Gastrocnemius medialis (tissue), 4 donors: ENCODE measurements at regions of chrX and their contacts with region 1.

Region 1: DNA sequence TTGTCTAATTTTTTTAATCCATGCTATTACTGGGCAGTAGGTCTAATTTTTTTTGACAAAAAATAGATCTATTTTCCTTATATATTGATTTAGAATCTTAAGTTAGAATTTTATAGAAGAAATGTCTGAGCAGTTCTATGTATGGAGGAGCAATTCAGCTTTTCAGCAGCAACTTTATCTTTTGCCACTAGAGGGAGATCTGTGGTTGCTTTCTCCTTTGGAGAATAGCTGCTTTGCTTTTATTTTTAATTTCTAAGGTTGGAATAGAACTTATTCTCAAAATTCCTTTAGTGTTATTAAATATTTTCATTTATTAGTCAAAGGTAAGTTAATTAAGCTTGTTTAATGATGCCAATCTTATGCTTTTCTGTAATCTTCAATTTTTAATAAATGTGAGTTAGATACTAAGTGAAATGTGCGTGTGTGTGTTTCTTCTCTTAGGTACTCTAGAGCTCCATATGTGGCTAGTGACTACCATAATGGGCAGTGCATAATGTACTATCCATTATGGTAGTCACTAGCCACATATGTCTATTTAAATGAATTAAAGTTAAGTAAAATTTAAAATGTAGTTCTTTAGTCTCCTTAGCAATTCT is 29.3 kb downstream of the FAM199X start:
- DNase-seq: no peak
- ATAC-seq: no peak
- H3K4me3 ChIP-seq: no peak overlapping the region
- H3K27ac ChIP-seq: no peak overlapping the region
- H3K4me1 ChIP-seq: no peaks in the 10 kb centered on the region
- H3K27me3 ChIP-seq: no peaks in the 10 kb centered on the region
- CTCF ChIP-seq: peak; percentile 23 to 75 (median 34)
- POLR2A ChIP-seq: no peak

Region 2: GRCh38 chrX:103747163-103747562 is 448.4 kb before region 1 on chrX:
- in situ Hi-C with region 1: no loop called
- intact Hi-C with region 1: no loop called
- DNase-seq: no peak
- ATAC-seq: no peak
- H3K4me3 ChIP-seq: no peak overlapping the region
- H3K27ac ChIP-seq: no peak overlapping the region
- H3K4me1 ChIP-seq: no peaks in the 10 kb centered on the region
- H3K27me3 ChIP-seq: peaks cover 0 to 4% (median 0%) of the 10 kb centered on the region in 3 donors
- CTCF ChIP-seq: no peak
- POLR2A ChIP-seq: no peak

Region 3: DNA sequence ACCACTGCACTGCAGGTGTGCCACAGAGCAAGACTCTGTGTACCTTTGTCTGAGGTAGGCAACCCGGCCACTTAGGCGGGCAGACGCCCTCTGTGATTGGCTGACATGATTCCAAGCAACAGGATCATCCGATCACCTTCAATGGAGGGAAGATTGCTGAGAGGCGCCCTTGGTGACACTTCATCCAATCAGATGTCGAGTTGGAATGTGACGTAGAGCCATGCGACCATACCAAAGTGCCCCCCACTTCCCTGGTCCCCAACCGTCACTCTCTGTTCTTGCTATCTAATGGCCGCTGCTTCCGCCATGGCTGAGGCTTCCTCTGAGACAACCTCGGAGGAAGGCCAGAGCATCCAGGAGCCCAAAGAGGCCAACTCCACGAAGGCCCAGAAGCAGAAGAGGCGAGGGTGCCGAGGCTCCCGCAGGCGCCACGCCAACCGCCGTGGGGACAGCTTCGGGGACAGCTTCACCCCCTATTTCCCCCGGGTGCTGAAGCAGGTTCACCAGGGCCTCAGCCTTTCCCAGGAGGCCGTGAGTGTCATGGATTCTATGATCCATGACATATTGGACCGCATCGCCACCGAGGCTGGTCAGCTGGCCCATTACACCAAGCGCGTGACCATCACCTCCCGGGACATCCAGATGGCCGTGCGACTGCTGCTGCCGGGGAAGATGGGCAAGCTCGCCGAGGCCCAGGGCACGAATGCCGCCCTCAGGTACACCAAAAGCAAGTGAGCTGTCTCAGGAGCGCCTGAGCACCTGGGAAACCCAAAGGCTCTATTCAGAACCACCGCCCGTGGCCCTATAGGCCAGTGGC is 155.7 kb before region 1 on chrX and contains the start of gene H2BW2:
- in situ Hi-C with region 1: no loop called
- intact Hi-C with region 1: no loop called
- DNase-seq: no peak
- ATAC-seq: no peak
- H3K4me3 ChIP-seq: no peak within 1 kb of the TSS
- H3K27ac ChIP-seq: no peak within 1 kb of the TSS
- H3K4me1 ChIP-seq: no peaks in the 10 kb centered on the region
- H3K27me3 ChIP-seq: peaks cover 0 to 17% (median 0%) of the 10 kb centered on the region in 3 donors
- CTCF ChIP-seq: no peak
- POLR2A ChIP-seq: no peak
- total RNA-seq, gene H2BW2: not detected

Region 4: GRCh38 chrX:104270920-104271512 is 75.4 kb after region 1 on chrX:
- in situ Hi-C with region 1: no loop called
- intact Hi-C with region 1: loop called (anchors 5 kb)
- DNase-seq: peak; percentile 36 to 55
- ATAC-seq: peak; percentile 73 to 85
- H3K4me3 ChIP-seq: peak overlapping the region in 1 of 4 donors; percentile 20
- H3K27ac ChIP-seq: no peak overlapping the region
- H3K4me1 ChIP-seq: no peaks in the 10 kb centered on the region
- H3K27me3 ChIP-seq: peaks cover 0 to 3% (median 0%) of the 10 kb centered on the region in 3 donors
- CTCF ChIP-seq: peak in 4 of 5 experiments; percentile 15 to 59 (median 35)
- POLR2A ChIP-seq: no peak

Region 5: GRCh38 chrX:104762641-104763040 is 567.1 kb after region 1 on chrX:
- in situ Hi-C with region 1: no loop called
- intact Hi-C with region 1: no loop called
- DNase-seq: no peak
- ATAC-seq: no peak
- H3K4me3 ChIP-seq: no peak overlapping the region
- H3K27ac ChIP-seq: no peak overlapping the region
- H3K4me1 ChIP-seq: no peaks in the 10 kb centered on the region
- H3K27me3 ChIP-seq: no peaks in the 10 kb centered on the region
- CTCF ChIP-seq: no peak
- POLR2A ChIP-seq: no peak